ENCODE measurements at regions of chr3 and their contacts with region 1.

Region 1: DNA sequence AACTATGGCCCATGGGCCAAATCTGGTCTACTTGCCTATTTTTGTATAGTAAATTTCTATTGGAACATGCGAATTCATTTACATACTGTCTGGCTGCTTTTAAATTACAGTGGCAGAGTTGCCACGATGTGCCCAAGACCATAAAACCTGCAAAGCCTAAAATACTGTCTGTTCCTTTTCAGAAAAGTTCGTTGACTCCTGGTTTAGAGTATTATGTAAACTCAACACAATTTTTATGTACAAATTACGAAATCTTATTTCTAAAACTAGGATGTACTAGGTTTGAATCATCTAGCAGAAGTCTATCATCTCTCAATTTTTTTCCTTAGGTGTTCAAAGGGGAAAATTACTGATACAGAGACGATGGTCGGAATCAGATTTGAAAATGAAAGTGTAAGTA is 26.9 kb downstream of the SENP2 start:
- DNase-seq: no peak
- ATAC-seq: no peak
- H3K4me3 Mint-ChIP-seq: no peak overlapping the region
- H3K27ac Mint-ChIP-seq: no peak overlapping the region
- H3K4me1 Mint-ChIP-seq: no peaks in the 10 kb centered on the region
- H3K27me3 Mint-ChIP-seq: no peaks in the 10 kb centered on the region
- CTCF ChIP-seq: no peak

Region 2: GRCh38 chr3:185595526-185595925 is 17.5 kb before region 1 on chr3:
- CTCF ChIA-PET with region 1: no interaction called
- POLR2A ChIA-PET with region 1: interaction called, 3 read pairs
- intact Hi-C with region 1: loop called (anchors 1 kb)
- DNase-seq: no peak
- ATAC-seq: peak; percentile 96
- H3K4me3 Mint-ChIP-seq: peak overlapping the region; percentile 52
- H3K27ac Mint-ChIP-seq: peak overlapping the region; percentile 97
- H3K4me1 Mint-ChIP-seq: peaks cover 33% of the 10 kb centered on the region
- H3K27me3 Mint-ChIP-seq: no peaks in the 10 kb centered on the region
- CTCF ChIP-seq: no peak

Region 3: DNA sequence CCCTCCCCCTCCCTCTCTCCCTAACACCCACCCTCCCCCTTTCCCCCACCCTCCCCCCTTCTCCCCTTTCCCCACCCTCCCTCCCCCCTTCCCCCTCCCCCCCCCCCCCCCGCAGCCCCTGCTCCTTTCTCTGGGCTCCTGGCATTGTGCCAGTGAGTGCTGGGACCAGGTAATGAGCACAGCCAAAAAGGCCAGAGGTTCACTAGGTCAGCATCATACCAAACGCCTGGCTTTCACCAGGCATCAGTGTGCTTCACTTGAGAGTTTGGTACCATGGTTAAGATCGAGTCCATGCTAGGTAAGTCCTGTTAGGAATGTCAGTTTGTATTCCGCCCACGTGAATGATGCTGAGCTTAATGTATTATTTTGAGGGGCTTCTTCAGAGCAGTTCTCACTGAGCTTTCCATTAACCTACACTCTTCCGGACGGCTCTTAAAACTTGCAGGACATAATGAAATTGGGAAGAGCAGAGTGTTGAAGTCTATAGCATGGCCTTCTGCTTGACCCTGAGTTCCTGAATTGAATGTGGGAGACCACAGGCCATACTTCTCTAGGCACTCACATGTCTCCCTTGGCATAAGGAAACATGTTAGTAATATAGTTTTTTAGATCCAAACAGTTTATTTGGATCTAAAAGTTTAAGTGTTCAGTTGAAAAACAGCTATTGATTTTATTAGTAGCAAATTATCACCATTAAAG is 18.6 kb after region 1 on chr3:
- CTCF ChIA-PET with region 1: no interaction called
- POLR2A ChIA-PET with region 1: no interaction called
- intact Hi-C with region 1: no loop called
- DNase-seq: no peak
- ATAC-seq: no peak
- H3K4me3 Mint-ChIP-seq: no peak overlapping the region
- H3K27ac Mint-ChIP-seq: no peak overlapping the region
- H3K4me1 Mint-ChIP-seq: no peaks in the 10 kb centered on the region
- H3K27me3 Mint-ChIP-seq: no peaks in the 10 kb centered on the region
- CTCF ChIP-seq: no peak

Region 4: GRCh38 chr3:187264021-187264420 is 1651.0 kb after region 1 on chr3:
- CTCF ChIA-PET with region 1: no interaction called
- POLR2A ChIA-PET with region 1: no interaction called
- intact Hi-C with region 1: no loop called
- DNase-seq: no peak
- ATAC-seq: no peak
- H3K4me3 Mint-ChIP-seq: no peak overlapping the region
- H3K27ac Mint-ChIP-seq: no peak overlapping the region
- H3K4me1 Mint-ChIP-seq: no peaks in the 10 kb centered on the region
- H3K27me3 Mint-ChIP-seq: peaks cover 36% of the 10 kb centered on the region
- CTCF ChIP-seq: no peak

Measured in activated B cell treated with CpG ODN at 0.5 μM for 24 hours (primary cell).